Mammary epithelial cell (primary cell): ENCODE measurements at regions of chr17 and their contacts with region 1.

Region 1: DNA sequence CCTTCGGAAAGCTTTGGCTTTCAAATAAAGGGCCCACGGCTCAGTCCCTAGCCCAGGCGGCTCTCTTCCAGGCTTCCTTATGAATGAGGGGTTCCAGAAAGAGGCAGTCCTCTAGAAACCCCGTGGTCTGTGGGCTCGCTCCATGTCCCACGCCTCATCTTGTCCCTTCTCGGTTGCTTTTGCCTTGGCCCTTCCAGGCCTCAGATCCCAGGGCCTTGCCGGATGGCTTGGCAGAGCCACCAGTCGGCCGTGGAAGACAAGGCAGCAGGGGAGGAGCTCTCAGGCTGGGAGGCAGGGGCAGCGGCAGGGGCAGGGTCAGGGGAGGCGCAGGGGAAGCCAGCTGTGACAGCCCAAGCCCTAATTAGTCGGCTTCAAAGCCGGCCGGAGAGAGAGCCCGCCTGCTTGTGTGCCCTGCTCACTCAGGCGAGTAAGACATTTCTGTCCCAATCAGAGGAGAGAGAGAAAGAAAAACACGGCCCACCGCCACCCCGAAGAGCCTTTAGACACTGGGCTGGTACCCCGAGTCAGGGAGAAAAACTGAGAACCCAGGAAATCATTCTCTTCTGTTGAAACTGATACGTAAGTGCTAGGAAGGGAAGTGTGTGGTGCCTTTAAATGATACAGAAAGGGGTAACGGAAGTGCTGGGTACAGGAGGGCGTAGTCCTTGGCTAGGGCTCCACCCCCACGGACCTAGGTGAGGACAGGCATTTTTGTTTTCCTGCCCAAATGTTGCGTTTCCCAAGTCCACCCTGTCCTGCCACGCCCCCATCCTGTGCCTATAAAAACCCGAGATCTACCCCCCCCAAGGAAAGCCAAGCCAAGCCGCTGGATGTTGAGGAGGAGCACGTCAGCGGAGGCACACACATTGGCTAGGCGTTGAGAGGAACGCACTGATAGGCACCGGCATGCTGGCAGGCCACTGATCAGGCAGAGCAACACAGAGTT is 27.8 kb upstream of the MEIOC start:
- DNase-seq: no peak
- H3K4me3 ChIP-seq: no peak overlapping the region
- H3K27ac ChIP-seq: no peak overlapping the region
- H3K4me1 ChIP-seq: no peaks in the 10 kb centered on the region
- H3K27me3 ChIP-seq: no peaks in the 10 kb centered on the region
- CTCF ChIP-seq: no peak

Region 2: DNA sequence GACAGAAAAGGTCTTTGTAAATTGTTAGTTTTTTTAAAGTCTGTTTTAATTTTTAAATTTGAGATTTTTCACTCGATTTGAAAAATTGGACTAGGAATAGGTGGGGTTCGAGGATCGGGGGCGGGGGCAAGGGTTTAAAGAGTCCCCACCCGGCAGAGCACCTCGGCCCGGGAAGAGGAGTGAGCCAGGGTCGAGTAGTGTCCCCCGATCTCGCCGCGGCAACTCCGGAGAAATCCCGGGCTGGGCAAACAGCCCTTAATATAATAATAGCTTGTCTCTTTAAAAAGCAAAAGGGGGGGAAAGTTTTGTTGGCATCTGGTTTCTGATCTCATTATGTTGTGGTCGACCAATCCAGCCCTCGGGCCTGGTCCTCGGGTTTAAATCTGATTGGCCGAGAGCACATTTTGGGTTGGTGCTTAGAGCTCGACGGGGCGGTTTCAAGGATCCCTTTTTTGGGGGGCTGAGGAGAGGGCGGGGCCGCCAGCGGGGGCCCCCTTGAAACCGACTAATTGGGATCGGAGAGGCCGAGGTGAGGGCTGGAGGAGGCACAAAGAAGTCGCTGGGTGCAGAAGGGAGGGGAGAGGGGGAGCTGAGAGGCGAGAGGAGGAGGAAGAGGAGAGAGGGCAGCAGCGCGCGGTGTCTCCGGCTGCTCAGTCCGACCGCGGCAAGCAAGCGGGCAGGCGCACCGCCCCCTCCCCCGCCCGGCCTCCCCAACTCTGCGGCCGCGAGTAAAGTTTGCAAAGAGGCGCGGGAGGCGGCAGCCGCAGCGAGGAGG is 71.5 kb before region 1 on chr17 and contains the start of gene FZD2:
- CTCF ChIA-PET with region 1: no interaction called
- dilution Hi-C with region 1: loop called (anchors 5 kb)
- in situ Hi-C with region 1: no loop called
- intact Hi-C with region 1: no loop called
- DNase-seq: peak; percentile 93
- H3K4me3 ChIP-seq: peak within 1 kb of the TSS; percentile 62 to 99 (median 67)
- H3K27ac ChIP-seq: peak within 1 kb of the TSS; percentile 61
- H3K4me1 ChIP-seq: peaks cover 14% of the 10 kb centered on the region
- H3K27me3 ChIP-seq: no peaks in the 10 kb centered on the region
- CTCF ChIP-seq: no peak
- total RNA-seq, gene FZD2: 1.8 to 4.5 TPM

Region 3: DNA sequence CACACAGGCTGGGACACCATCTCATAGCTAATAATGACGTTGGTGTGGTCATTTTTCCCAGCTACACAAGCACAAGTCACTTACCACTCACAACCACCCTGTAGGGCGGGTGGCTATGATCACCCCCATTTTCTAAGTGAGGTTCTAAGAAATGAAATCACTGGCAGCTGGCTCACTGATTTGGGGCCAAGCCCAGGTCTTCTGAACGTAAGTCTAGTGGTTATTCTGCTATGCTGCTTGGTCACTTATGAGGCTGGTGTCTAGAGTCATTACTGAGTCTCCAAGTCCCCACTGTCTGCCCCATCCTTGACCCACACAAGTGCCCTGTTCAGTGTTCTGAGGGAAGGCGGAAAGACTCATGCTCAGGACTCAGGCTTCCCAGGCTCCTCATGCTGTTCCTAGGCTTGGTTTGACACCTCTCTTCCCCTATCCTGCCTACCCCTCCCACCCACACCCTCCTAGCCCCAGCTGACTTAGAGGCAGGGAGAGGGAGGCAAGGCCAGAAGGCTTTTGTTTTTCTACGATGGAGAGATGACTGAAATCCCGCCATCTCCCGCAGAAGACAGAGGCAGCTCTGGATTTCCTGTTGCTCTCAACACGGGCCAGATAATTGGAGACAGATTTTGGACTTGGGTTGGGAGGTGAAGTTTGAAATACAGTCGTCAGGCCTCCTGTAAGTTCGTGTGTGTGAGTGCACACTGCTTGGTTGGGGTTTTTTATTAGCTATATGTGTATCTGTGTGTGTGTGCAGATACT is 39.0 kb before region 1 on chr17:
- CTCF ChIA-PET with region 1: no interaction called
- dilution Hi-C with region 1: loop called (anchors 5 kb)
- in situ Hi-C with region 1: no loop called
- intact Hi-C with region 1: no loop called
- DNase-seq: no peak
- H3K4me3 ChIP-seq: no peak overlapping the region
- H3K27ac ChIP-seq: no peak overlapping the region
- H3K4me1 ChIP-seq: peaks cover 7% of the 10 kb centered on the region
- H3K27me3 ChIP-seq: no peaks in the 10 kb centered on the region
- CTCF ChIP-seq: no peak